ENCODE measurements at regions of chr12 and their contacts with region 1.

Region 1: GRCh38 chr12:54220092-54220557 is 31.3 kb upstream of the SMUG1 start:
- DNase-seq: peak; percentile 61 to 81
- ATAC-seq: peak; percentile 67 to 74
- H3K4me3 ChIP-seq: peak overlapping the region; percentile 27; the same call in 1 of the 3 replicates
- H3K27ac ChIP-seq: peak overlapping the region; percentile 37 to 66; a peak in 5 of 6 replicates
- H3K4me1 ChIP-seq: peaks cover 24% of the 10 kb centered on the region
- CTCF ChIP-seq: peak; percentile 81
- EP300 ChIP-seq: no peak
- POLR2A ChIP-seq: no peak
- RAD21 ChIP-seq: peak; percentile 79 to 82

Region 2: DNA sequence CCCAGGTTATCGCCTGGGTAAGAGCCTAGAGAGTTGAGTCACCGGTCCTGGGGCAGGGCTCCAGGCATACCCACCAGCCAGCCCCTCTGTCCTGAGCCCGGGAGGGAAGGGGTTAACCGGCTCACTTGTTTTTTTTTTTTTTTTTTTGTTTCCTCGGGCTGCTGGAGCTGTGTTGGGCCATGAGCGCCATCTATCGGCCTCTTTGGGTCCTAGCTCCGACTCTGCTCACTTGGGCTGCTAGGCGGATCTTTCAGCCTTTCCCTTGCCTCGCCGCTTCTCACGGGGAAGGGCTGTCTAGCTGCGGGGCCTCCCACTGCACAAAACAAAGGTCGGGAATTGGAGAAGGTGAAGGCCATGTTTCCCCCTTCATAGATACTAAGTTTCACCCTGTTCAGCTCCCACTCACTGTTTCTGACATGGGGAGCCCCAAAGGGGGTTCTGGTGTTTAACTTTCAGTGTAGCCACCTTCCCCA is 28.5 kb before region 1 on chr12:
- CTCF ChIA-PET with region 1: interaction called, 33 read pairs
- POLR2A ChIA-PET with region 1: no interaction called
- DNase-seq: peak; percentile 87 to 92
- ATAC-seq: peak; percentile 71 to 84
- H3K4me3 ChIP-seq: no peak overlapping the region
- H3K27ac ChIP-seq: peak overlapping the region; percentile 10 to 70; a peak in 3 of 6 replicates
- H3K4me1 ChIP-seq: peaks cover 25% of the 10 kb centered on the region
- CTCF ChIP-seq: peak; percentile 79
- EP300 ChIP-seq: no peak
- POLR2A ChIP-seq: no peak
- RAD21 ChIP-seq: peak; percentile 90 to 92

Region 3: GRCh38 chr12:54240971-54241588 is 21.0 kb after region 1 on chr12:
- CTCF ChIA-PET with region 1: interaction called, 43 read pairs
- POLR2A ChIA-PET with region 1: interaction called, 6 read pairs
- DNase-seq: no peak
- ATAC-seq: no peak
- H3K4me3 ChIP-seq: no peak overlapping the region
- H3K27ac ChIP-seq: no peak overlapping the region
- H3K4me1 ChIP-seq: no peaks in the 10 kb centered on the region
- CTCF ChIP-seq: no peak
- EP300 ChIP-seq: no peak
- POLR2A ChIP-seq: no peak
- RAD21 ChIP-seq: no peak

Region 4: DNA sequence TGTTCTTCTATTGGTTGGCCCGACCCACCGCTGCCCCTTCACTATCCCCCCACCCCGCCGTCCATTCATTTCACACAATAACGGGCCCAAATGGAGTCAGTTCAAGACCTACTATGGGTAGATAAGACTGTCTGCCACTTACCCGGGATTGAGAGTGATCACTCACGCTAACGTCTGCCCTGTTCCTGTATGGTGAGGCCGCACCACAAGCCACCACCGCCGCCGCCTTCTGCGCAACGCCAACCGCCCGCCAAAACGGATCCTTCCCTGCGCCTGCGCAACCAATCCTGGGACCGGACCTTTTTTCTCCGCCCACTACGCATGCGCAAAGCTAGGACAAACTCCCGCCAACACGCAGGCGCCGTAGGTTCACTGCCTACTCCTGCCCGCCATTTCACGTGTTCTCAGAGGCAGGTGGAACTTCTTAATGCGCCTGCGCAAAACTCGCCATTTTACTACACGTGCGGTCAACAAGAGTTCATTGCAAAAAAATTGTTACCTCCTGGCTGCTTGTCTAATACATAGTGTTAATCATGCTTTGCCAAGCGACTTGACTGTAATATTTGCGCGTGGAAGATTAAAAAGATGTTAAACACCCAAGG is 59.8 kb after region 1 on chr12 and contains the start of gene CBX5:
- CTCF ChIA-PET with region 1: interaction called, 7 read pairs
- POLR2A ChIA-PET with region 1: interaction called, 21 read pairs
- DNase-seq: peak; percentile 98 to 100
- ATAC-seq: peak; percentile 55 to 65
- H3K4me3 ChIP-seq: peak within 1 kb of the TSS; percentile 88
- H3K27ac ChIP-seq: peak within 1 kb of the TSS; percentile 87 to 96
- H3K4me1 ChIP-seq: peaks cover 22% of the 10 kb centered on the region
- CTCF ChIP-seq: no peak
- EP300 ChIP-seq: no peak
- POLR2A ChIP-seq: peak; percentile 84
- RAD21 ChIP-seq: no peak
- polyA plus RNA-seq, gene CBX5: 115 and 129 TPM in 2 replicates

Region 5: DNA sequence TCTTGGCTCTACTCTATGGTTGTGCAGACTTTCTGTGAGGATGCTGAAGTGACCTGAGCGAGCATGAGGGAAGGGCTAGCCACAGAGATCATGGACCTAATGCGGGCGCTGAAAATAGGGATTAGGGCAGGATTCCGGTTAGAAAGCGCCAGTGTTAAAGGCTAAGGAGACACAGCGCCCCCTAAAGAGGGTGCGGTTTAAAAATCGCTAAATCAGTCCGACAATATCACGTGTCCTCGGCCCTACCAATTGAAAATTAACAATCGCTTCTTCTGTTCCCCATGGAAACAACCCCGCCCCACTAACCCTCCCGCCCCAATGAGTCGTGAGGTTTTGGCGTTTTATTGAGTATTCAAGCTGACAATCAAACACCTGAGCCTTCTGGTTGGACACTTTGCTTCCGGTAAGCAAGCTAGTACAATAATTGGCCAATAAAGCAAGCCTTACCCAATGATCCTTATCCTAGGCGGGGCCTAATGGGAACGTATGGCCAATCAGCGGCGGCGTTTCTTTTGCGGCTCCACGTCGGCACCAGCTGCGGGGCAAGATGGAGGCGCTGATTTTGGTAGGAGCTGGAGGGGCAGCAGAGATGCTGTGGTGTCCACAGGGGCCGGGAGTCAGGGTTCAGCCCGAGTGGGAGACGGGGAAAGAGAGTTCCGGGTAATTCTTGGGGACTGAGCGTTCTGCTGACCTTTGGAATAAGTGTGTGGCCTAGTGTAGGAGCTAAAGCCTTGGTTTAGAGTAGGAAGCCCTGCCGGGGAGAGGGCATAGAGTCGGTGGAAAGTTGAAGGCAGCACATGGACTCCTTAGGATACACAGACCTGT is 104.7 kb after region 1 on chr12 and contains the start of gene COPZ1:
- CTCF ChIA-PET with region 1: interaction called, 31 read pairs
- POLR2A ChIA-PET with region 1: interaction called, 5 read pairs
- DNase-seq: peak; percentile 98 to 100
- ATAC-seq: peak; percentile 97 to 98
- H3K4me3 ChIP-seq: peak within 1 kb of the TSS; percentile 74
- H3K27ac ChIP-seq: peak within 1 kb of the TSS; percentile 85 to 91
- H3K4me1 ChIP-seq: peaks cover 40% of the 10 kb centered on the region
- CTCF ChIP-seq: peak; percentile 96
- EP300 ChIP-seq: no peak
- POLR2A ChIP-seq: peak; percentile 87
- RAD21 ChIP-seq: peak; percentile 79 to 81
- polyA plus RNA-seq, gene COPZ1: 590 and 613 TPM in 2 replicates

Region 6: GRCh38 chr12:54359033-54359761 is 139.1 kb after region 1 on chr12:
- CTCF ChIA-PET with region 1: interaction called, 108 read pairs
- POLR2A ChIA-PET with region 1: interaction called, 5 read pairs
- DNase-seq: peak; percentile 99 to 100
- ATAC-seq: peak; percentile 80 to 92
- H3K4me3 ChIP-seq: peak overlapping the region; percentile 54
- H3K27ac ChIP-seq: peak overlapping the region; percentile 81 to 91
- H3K4me1 ChIP-seq: peaks cover 28% of the 10 kb centered on the region
- CTCF ChIP-seq: no peak
- EP300 ChIP-seq: no peak
- POLR2A ChIP-seq: peak; percentile 38; the same call in 1 of the 2 replicates
- RAD21 ChIP-seq: no peak

Measured in A549 (cell line).